ENCODE measurements at regions of chr2 and their contacts with region 1.

Region 1: DNA sequence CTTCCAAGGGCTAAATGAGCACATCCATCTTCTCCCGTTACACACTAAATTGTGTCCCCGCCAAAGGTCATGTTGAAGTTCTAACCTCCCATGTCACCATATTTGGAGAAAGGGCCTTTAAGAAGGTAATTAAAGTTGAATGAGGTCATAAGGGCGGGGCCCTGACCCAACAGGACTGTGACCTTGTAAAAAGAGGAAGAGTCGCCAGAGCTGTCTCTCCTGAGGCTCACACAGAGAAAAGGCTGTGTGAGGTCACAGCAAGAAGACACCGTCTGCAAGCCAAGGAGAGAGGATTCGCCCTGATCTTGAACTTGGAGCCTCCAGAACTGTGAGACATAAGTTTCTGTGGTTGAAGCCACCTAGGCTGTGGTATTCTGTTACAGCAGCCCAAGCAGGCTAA is 24.1 kb downstream of the TRABD2A start:
- DNase-seq: peak; percentile 76
- H3K4me3 Mint-ChIP-seq: peak overlapping the region; percentile 73
- H3K27ac Mint-ChIP-seq: peak overlapping the region; percentile 91
- H3K4me1 Mint-ChIP-seq: peaks cover 94% of the 10 kb centered on the region
- H3K27me3 Mint-ChIP-seq: no peaks in the 10 kb centered on the region

Region 2: DNA sequence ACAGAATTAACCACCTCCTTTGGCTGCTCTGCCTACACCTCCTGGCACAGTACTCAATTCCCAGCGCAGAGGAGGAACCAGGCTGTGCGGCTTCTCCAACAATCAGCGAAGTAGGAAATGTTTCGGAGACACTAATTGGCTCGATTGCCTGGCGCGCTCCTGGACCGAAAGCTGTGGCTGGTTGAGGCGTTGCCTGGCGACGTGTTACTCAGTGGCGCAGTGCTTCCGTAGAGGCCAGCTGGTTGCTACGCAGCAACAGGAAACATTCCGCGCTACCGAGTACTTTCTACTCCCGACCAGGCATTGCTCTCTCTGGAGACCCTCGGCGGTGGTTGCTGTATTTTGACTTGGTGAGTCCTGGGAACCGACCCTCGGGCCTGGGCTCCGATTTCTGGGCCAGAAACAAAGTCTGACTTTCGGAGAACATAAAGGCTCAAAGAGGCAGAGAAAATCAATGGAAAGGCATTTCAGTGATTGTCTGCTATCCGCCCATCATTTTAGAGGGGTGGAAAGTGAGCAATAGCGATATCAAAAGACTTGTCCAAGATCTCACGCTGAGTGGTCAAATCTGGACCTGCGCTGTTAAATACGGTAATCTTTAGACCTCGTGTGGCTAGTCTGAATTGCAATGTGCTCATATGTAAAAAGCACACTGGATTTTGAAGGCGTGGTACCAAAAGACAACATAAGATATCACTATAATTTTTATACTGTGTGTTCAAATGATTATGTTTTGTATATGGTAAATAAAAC is 340.4 kb before region 1 on chr2 and contains the start of gene DNAH6:
- CTCF ChIA-PET with region 1: no interaction called
- intact Hi-C with region 1: no loop called
- DNase-seq: peak; percentile 94
- H3K4me3 Mint-ChIP-seq: peak within 1 kb of the TSS; percentile 85
- H3K27ac Mint-ChIP-seq: no peak within 1 kb of the TSS
- H3K4me1 Mint-ChIP-seq: peaks cover 22% of the 10 kb centered on the region
- H3K27me3 Mint-ChIP-seq: no peaks in the 10 kb centered on the region
- total RNA-seq, gene DNAH6: 0.07 to 0.62 TPM

Region 3: DNA sequence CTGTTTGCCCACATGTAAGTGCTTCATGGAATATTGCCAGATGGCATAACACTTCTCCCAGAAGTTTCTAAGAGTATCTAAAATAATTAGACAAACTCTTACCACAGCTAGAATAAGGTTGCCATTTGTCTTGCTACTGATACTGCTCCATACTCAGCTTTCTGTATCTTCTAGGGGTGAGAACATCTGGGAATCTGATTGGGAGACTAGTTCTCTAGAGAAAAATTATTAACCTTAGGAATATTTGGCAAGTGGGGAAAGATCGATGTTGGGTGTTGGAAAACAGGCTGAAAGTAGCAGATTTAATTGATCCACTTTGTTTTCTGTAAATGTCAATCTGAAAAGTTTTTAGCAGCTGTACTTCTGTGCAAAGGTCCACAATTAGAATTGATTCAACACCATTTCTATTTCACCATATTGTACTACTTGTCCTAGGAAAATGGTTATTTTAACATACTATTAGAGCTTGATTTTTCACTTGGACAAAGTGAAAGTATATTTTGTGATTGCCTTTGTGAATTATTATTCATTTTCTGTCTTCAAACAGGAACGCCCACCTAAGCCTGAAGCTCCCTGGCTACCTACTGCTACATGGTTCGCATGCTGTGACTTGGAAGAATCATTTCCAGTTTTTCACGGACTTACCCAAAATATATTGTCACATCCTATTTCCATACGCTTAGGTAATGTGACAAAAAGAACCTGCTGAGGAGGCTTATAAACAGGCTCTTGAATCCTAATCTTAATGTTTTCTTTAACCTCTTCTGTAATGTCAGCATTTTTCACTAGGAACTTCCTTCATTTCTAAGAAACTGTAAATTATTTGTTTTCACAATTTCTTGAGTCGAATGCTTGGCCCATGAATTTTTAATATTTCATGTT is 123.6 kb before region 1 on chr2:
- CTCF ChIA-PET with region 1: no interaction called
- intact Hi-C with region 1: loop called (anchors 5 kb)
- DNase-seq: no peak
- H3K4me3 Mint-ChIP-seq: no peak overlapping the region
- H3K27ac Mint-ChIP-seq: no peak overlapping the region
- H3K4me1 Mint-ChIP-seq: peaks cover 37% of the 10 kb centered on the region
- H3K27me3 Mint-ChIP-seq: no peaks in the 10 kb centered on the region

Region 4: GRCh38 chr2:84741296-84741765 is 115.5 kb before region 1 on chr2:
- CTCF ChIA-PET with region 1: interaction called, 3 read pairs
- intact Hi-C with region 1: loop called (anchors 1 kb)
- DNase-seq: peak; percentile 79
- H3K4me3 Mint-ChIP-seq: no peak overlapping the region
- H3K27ac Mint-ChIP-seq: no peak overlapping the region
- H3K4me1 Mint-ChIP-seq: peaks cover 24% of the 10 kb centered on the region
- H3K27me3 Mint-ChIP-seq: no peaks in the 10 kb centered on the region

Region 5: DNA sequence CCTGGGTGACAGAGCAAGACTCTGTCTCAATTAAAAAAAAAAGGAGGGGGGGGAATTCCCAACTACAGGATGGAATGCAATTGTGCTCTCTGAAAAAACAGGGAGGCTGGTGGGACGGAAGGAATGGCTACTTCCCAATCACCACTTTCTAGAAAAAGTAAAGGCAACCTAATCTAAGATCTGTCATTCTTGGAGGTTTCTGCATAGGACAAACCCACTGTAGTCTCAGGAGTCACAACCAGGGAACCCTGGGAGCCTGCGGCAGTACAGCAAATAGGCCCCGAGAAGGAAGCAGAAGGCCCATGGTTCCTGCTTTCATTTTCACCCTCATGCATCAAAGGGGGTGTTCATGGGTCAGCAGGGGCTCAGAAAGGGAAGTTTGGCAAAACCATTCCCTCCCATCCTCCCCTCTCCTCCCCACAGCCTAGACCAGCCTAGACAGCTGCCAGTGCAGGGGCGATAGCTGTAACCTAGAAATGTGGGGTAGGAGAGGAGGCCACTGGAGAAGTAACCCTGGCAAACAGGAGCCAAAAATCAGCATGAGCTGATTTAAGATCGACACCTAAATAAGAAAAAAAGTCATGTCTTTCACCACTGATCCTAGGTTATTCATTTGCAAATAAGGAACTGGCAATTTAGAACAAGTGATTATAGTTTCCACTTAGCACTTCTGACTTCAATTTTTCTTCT is 23.9 kb before region 1 on chr2:
- CTCF ChIA-PET with region 1: interaction called, 6 read pairs
- intact Hi-C with region 1: loop called (anchors 1 kb)
- DNase-seq: peak; percentile 52
- H3K4me3 Mint-ChIP-seq: peak overlapping the region; percentile 43
- H3K27ac Mint-ChIP-seq: peak overlapping the region; percentile 87
- H3K4me1 Mint-ChIP-seq: peaks cover 33% of the 10 kb centered on the region
- H3K27me3 Mint-ChIP-seq: no peaks in the 10 kb centered on the region

Region 6: GRCh38 chr2:84840306-84840705 is 16.5 kb before region 1 on chr2:
- CTCF ChIA-PET with region 1: interaction called, 25 read pairs
- intact Hi-C with region 1: loop called (anchors 2 kb)
- DNase-seq: no peak
- H3K4me3 Mint-ChIP-seq: peak overlapping the region; percentile 74
- H3K27ac Mint-ChIP-seq: peak overlapping the region; percentile 80
- H3K4me1 Mint-ChIP-seq: peaks cover 86% of the 10 kb centered on the region
- H3K27me3 Mint-ChIP-seq: no peaks in the 10 kb centered on the region

Region 7: GRCh38 chr2:84846041-84846663 is 10.6 kb before region 1 on chr2:
- CTCF ChIA-PET with region 1: interaction called, 25 read pairs
- intact Hi-C with region 1: loop called (anchors 1 kb)
- DNase-seq: peak; percentile 66
- H3K4me3 Mint-ChIP-seq: peak overlapping the region; percentile 78
- H3K27ac Mint-ChIP-seq: peak overlapping the region; percentile 99
- H3K4me1 Mint-ChIP-seq: peaks cover 95% of the 10 kb centered on the region
- H3K27me3 Mint-ChIP-seq: no peaks in the 10 kb centered on the region

Region 8: GRCh38 chr2:85248773-85249509 is 392.2 kb after region 1 on chr2:
- CTCF ChIA-PET with region 1: no interaction called
- intact Hi-C with region 1: no loop called
- DNase-seq: no peak
- H3K4me3 Mint-ChIP-seq: no peak overlapping the region
- H3K27ac Mint-ChIP-seq: no peak overlapping the region
- H3K4me1 Mint-ChIP-seq: no peaks in the 10 kb centered on the region
- H3K27me3 Mint-ChIP-seq: no peaks in the 10 kb centered on the region

Region 9: GRCh38 chr2:85401850-85402243 is 545.1 kb after region 1 on chr2:
- CTCF ChIA-PET with region 1: no interaction called
- intact Hi-C with region 1: no loop called
- DNase-seq: no peak
- H3K4me3 Mint-ChIP-seq: no peak overlapping the region
- H3K27ac Mint-ChIP-seq: no peak overlapping the region
- H3K4me1 Mint-ChIP-seq: peaks cover 12% of the 10 kb centered on the region
- H3K27me3 Mint-ChIP-seq: no peaks in the 10 kb centered on the region